Dorsolateral prefrontal cortex (tissue), 120 donors: ENCODE measurements at regions of chr1 and their contacts with region 1.

Region 1: DNA sequence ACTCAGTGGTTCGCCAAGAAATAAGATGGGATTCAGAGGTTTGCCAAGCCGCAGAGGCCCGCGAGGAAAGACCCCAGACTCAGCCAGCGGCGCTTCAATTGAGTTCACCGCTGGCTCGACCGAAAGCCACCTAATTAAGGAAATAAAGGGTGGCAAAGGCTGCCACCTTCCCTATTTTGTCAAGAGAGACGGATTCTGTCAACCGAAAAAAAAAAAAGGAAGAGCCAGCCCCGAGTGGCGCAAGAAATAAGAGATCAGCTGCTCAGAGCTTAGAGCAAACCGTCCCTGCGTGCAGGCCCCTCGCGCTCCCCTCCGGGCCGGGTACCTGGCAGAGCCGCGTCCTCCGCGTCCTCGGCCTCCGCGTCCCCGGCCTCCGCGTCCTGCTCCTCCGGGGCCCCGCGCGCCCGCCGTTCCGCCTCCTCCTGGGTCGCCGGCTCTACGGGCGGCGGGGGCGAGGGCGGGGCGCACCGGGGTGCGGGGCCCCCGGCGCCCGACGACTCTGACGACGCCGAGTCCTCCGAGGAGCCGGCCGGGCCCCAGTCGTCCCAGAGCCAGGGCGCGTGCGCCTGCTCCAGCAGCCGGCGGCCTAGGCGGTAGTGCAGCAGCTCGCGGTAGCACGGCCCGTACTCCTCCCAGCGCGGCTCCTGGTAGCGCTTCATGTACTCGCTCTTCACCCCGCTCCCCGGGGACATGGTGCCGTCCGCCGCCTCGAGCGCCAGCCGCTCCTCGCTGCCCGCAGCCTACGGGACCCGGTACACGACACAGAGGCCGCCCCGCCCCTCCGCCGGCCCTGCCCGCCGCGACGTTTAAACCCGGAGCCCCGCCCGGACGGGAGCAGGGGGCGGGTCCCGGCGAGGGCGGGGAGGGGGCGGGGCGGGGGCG is 832 bp downstream of the CCSAP start:
- DNase-seq: peak; percentile 88 to 95 (median 90)
- H3K4me3 ChIP-seq: peak overlapping the region; percentile 63 to 99 (median 90)
- H3K27ac ChIP-seq: peak overlapping the region; percentile 90 to 100 (median 99)
- H3K27me3 ChIP-seq: no peaks in the 10 kb centered on the region
- CTCF ChIP-seq: peak in 4 of 56 donors; percentile 3 to 15 (median 8)

Region 2: GRCh38 chr1:229270547-229271447 is 71.2 kb before region 1 on chr1 and contains the start of gene RAB4A:
- intact Hi-C with region 1: loop called (anchors 2 kb)
- DNase-seq: peak; percentile 60 to 91 (median 80)
- H3K4me3 ChIP-seq: peak within 1 kb of the TSS; percentile 60 to 94 (median 80)
- H3K27ac ChIP-seq: peak within 1 kb of the TSS in 58 of 59 donors; percentile 6 to 93 (median 82)
- H3K27me3 ChIP-seq: no peaks in the 10 kb centered on the region
- CTCF ChIP-seq: peak in 5 of 56 donors; percentile 6 to 46 (median 12)
- total RNA-seq, gene RAB4A: 64.3 to 117 (median 86.8) TPM

Region 3: GRCh38 chr1:229410692-229411443 is 68.9 kb after region 1 on chr1:
- intact Hi-C with region 1: loop called in 1 of 2 experiments (anchors 2 kb)
- DNase-seq: peak; percentile 52 to 96 (median 83)
- H3K4me3 ChIP-seq: peak overlapping the region in 46 of 59 donors; percentile 1 to 49 (median 31)
- H3K27ac ChIP-seq: peak overlapping the region; percentile 4 to 98 (median 88)
- H3K27me3 ChIP-seq: peaks cover 0 to 5% (median 0%) of the 10 kb centered on the region in 45 donors
- CTCF ChIP-seq: peak in 1 of 56 donors; percentile 12

Region 4: DNA sequence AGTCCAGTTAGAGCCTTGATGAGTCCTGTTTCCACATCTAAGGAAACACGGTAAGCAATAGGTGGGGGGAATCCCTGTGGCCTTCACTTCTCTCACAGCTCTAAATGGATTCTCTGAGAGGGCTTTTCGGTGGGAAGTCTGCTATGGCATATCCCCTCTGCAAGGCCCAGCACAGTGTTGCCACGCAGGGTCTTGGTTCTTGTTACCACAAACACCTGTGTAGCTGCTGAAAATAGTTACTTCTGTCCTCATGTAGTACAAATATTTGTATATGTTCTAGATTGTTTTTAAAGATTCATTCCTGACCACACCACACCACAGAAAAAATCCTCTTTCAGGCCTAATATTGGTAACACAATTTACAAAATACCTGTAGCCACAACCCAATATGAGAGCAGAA is 86.2 kb after region 1 on chr1:
- intact Hi-C with region 1: loop called in 1 of 2 experiments (anchors 5 kb)
- DNase-seq: no peak
- H3K4me3 ChIP-seq: no peak overlapping the region
- H3K27ac ChIP-seq: no peak overlapping the region
- H3K27me3 ChIP-seq: peaks cover 0 to 49% (median 26%) of the 10 kb centered on the region in 45 donors
- CTCF ChIP-seq: no peak

Region 5: GRCh38 chr1:229479660-229480399 is 137.8 kb after region 1 on chr1:
- intact Hi-C with region 1: loop called (anchors 5 kb)
- DNase-seq: no peak
- H3K4me3 ChIP-seq: peak overlapping the region in 2 of 59 donors; percentile 15 to 32
- H3K27ac ChIP-seq: peak overlapping the region in 57 of 59 donors; percentile 19 to 89 (median 80)
- H3K27me3 ChIP-seq: no peaks in the 10 kb centered on the region
- CTCF ChIP-seq: no peak